Cardiac septum (tissue), 1 donor: ENCODE measurements at regions of chr3 and their contacts with region 1.

Region 1: DNA sequence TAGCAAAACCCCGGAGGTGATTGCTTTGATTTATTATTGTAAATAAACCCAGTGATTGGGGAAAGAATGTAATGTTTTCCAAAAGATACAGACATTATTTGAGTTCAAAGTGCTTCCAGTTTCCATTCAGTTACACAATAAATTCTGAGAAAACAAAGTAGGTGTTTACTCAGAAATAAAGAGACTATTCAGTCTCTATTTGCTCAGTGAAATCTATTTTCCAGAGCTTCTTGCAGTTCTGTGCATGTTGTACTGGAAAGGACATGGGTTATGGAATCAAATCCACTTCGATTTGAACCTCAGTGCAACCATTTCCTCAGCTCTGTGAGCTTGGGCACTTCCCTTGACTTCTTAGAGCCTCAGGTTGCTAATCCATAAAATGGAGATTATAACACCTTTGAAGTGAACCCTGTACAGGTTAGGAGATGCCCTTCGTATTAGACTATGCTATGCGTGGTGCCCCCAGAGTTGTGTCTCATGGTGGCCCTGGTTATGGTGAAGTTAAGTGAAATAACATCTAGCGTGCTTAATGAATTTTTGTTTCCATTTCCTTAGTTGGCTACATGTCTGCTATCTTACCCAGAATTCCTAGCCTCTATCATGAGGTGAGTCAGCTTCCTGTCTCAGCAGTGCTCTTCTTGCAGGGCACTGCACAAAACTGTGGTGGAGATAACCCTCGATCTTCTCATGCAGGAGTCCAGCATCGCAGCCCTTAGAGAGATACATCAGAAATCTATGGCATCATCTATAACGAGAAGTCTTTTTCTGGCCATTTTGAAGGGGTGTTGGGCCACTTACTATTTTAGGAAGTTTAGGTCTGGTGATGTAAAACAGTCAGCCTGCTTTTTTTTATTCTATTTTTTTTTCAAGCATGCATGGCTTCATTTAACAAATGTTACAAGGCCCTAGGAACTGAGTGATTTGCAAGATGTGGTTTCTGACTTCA is 97.7 kb downstream of the RPL39L start:
- DNase-seq: no peak

Region 2: GRCh38 chr3:187101184-187102072 is 59.8 kb after region 1 on chr3:
- intact Hi-C with region 1: loop called (anchors 5 kb)
- DNase-seq: peak; percentile 84

Region 3: DNA sequence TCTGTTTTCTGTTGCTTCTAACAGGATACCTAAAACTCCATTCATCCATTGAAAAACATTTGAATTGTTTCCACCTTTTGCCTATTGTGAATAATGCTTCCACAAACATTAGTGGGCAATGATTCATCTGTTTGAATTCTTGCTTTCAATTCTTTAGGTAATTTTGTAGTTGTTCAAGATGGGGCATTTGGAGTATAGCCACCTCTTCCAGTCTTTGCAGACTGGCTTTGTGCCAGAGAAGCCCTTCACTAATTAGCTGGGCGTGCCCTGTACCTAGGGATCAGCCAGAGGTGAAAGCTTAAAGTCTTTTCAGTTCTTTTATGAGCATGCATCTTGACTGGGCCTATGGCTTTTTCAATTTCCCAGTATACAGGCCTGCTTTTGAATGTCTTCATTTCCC is 166.5 kb after region 1 on chr3:
- intact Hi-C with region 1: no loop called
- DNase-seq: no peak